Gastrocnemius medialis (tissue), 4 donors: ENCODE measurements at regions of chr1 and their contacts with region 1.

Region 1: DNA sequence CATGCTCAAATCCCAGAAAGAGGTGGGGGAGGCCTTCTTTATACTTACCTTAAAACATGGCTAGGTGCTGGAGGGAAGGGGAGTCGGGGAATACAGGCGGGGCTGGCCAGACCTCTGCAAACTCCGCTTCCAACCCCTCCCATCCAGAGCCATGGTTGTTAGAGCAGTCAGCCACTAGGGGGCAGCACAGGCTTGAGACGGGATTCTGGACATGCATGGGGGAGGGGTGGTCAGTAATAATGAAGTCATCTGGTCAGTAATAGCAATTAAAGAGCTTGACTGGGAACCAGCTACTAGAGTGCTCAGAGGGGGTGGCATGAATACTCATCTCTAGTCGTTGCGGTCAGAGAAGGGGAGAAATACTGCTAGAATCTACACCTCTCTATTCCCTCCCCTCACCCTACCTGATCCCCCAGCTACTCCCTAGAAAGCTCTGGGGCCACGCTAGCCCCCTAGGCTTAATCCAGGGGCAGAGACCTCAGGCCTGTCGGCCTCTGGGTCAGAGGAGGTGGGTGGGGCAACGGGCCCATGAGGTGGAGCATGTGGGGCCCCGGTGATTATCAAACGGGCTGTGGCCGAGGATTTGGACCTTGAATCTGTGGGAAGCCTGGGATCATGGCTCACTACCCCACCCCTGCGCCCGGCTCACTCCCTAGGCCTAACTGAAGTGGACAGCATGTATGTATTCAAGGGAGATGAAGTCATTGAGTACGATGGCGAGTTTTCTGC is 2.9 kb downstream of the CASQ1 start:
- DNase-seq: peak; percentile 78 to 86
- ATAC-seq: peak; percentile 66 to 81
- H3K4me3 ChIP-seq: peak overlapping the region; percentile 22 to 54 (median 34)
- H3K27ac ChIP-seq: peak overlapping the region; percentile 90 to 95 (median 92)
- H3K4me1 ChIP-seq: peaks cover 80 to 92% of the 10 kb centered on the region in 2 donors
- H3K27me3 ChIP-seq: no peaks in the 10 kb centered on the region
- CTCF ChIP-seq: peak; percentile 95 to 98 (median 98)
- POLR2A ChIP-seq: peak; percentile 8 to 57

Region 2: GRCh38 chr1:160117709-160118183 is 75.5 kb before region 1 on chr1:
- in situ Hi-C with region 1: no loop called
- intact Hi-C with region 1: loop called (anchors 5 kb)
- DNase-seq: peak; percentile 70 to 87
- ATAC-seq: peak; percentile 38 to 52
- H3K4me3 ChIP-seq: peak overlapping the region; percentile 54 to 86 (median 72)
- H3K27ac ChIP-seq: peak overlapping the region; percentile 97 to 100 (median 98)
- H3K4me1 ChIP-seq: peaks cover 74 to 83% of the 10 kb centered on the region in 2 donors
- H3K27me3 ChIP-seq: no peaks in the 10 kb centered on the region
- CTCF ChIP-seq: no peak
- POLR2A ChIP-seq: peak; percentile 45 to 55

Region 3: DNA sequence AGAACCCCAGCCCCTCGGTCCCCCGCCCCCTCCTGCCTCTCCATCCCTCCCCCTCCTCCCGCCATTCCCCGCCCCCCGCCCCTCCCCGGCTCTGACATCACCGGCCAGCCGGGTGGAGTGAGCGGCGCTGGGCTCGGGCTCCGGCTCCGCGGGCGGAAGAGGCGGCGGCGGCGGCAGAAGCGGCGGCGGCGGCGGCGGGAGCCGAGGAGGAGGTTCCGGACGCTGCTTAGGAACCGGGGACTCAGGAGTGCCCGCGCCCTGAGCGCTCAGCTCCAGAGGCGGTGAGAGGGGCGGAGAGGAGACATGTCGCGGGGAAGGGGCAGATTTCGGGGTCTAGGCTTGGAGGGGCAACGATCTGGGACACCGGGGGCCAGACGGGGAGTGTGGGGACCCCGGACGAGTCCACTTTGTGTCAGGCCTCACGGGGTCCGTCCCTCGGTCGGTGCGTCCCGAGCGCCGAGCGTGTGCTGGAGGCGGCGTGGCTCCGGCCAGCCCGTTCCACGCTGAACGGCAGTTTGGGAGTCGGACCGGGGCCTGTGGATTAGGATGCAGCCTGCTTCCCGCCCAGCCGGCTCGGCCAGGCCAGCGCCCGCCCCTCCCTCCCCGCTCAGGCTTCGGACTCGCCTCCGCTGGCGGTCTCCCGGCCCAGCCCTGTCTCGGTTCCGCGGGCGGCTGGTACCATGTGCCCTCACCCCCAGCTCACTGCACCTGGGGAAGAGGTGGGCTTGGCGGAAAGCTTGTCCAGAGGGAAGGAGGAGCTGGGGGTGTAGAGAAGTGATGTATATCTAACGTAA is 12.2 kb after region 1 on chr1 and contains the start of gene PEA15:
- in situ Hi-C with region 1: no loop called
- intact Hi-C with region 1: loop called (anchors 2 kb)
- DNase-seq: peak in 1 of 2 donors; percentile 54
- ATAC-seq: peak; percentile 61 to 66
- H3K4me3 ChIP-seq: peak within 1 kb of the TSS; percentile 73 to 94 (median 86)
- H3K27ac ChIP-seq: peak within 1 kb of the TSS; percentile 84 to 93 (median 90)
- H3K4me1 ChIP-seq: peaks cover 35 to 61% of the 10 kb centered on the region in 2 donors
- H3K27me3 ChIP-seq: no peaks in the 10 kb centered on the region
- CTCF ChIP-seq: no peak
- POLR2A ChIP-seq: peak; percentile 69 to 76
- total RNA-seq, gene PEA15: 10.5 to 34.7 (median 27.2) TPM

Region 4: GRCh38 chr1:160284782-160285344 is 91.6 kb after region 1 on chr1 and contains the start of gene PEX19:
- in situ Hi-C with region 1: loop called in 1 of 4 experiments (anchors 5 kb)
- intact Hi-C with region 1: loop called (anchors 2 kb)
- DNase-seq: peak; percentile 90 to 92
- ATAC-seq: peak; percentile 95 to 96
- H3K4me3 ChIP-seq: peak within 1 kb of the TSS; percentile 65 to 91 (median 82)
- H3K27ac ChIP-seq: peak within 1 kb of the TSS; percentile 79 to 86 (median 84)
- H3K4me1 ChIP-seq: peaks cover 11 to 17% of the 10 kb centered on the region in 2 donors
- H3K27me3 ChIP-seq: no peaks in the 10 kb centered on the region
- CTCF ChIP-seq: no peak
- POLR2A ChIP-seq: peak; percentile 64 to 69
- total RNA-seq, gene PEX19: 61.9 to 151 (median 82.4) TPM

Region 5: GRCh38 chr1:160342953-160343869 is 150.0 kb after region 1 on chr1 and contains the starts of genes COPA and NCSTN:
- in situ Hi-C with region 1: no loop called
- intact Hi-C with region 1: loop called (anchors 5 kb)
- DNase-seq: peak; percentile 92
- ATAC-seq: peak; percentile 99 to 100
- H3K4me3 ChIP-seq: peak within 1 kb of the TSS; percentile 77 to 96 (median 86)
- H3K27ac ChIP-seq: peak within 1 kb of the TSS; percentile 89 to 96 (median 96)
- H3K4me1 ChIP-seq: peaks cover 30 to 39% of the 10 kb centered on the region in 2 donors
- H3K27me3 ChIP-seq: no peaks in the 10 kb centered on the region
- CTCF ChIP-seq: peak in 2 of 5 experiments; percentile 24 to 31
- POLR2A ChIP-seq: peak; percentile 86 to 93
- total RNA-seq, gene COPA: 59.0 to 103 (median 85.9) TPM
- total RNA-seq, gene NCSTN: 29.2 to 59.3 (median 33.2) TPM